GM12878 (cell line): ENCODE measurements at regions of chr3 and their contacts with region 1.

Region 1: GRCh38 chr3:138923531-138923994 is 23.4 kb downstream of the FOXL2 start:
- DNase-seq: peak; percentile 35
- ATAC-seq: peak; percentile 98
- H3K4me3 ChIP-seq: no peak overlapping the region
- H3K27ac ChIP-seq: no peak overlapping the region
- H3K4me1 ChIP-seq: no peaks in the 10 kb centered on the region
- H3K27me3 ChIP-seq: no peaks in the 10 kb centered on the region
- CTCF ChIP-seq: peak; percentile 90 to 93 (median 91)
- EP300 ChIP-seq: no peak
- POLR2A ChIP-seq: no peak
- RAD21 ChIP-seq: peak; percentile 81

Region 2: DNA sequence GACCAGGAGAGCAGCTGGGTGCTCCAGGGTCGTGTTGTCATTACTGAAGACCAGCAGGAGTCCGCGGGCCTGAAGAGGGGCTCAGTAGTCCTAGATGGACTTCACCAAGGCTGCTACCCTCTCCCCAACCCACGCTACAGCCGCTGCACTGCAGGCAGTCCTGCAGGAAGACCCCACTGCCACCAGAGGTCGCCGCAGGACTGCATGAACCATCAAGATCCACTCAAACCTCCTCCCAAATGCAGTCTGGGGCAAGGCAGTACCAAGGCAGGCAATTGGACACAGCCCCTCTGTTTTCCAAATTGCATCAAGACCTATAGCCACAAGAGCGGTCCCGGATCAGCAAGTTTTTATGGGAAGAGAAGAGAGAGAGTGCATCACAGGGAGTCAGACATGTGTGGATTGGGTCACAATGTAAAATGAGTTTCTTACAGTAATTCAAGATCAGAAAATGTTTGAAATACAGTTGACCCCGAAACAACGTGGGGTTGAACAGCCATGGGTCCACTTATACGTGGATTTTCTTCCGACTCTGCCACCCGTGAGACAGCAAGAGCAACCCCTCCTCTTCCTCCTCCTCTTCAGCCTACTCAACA is 854.9 kb before region 1 on chr3:
- CTCF ChIA-PET with region 1: no interaction called
- POLR2A ChIA-PET with region 1: no interaction called
- RAD21 ChIA-PET with region 1: interaction called, 3 read pairs
- SMC1A ChIA-PET with region 1: no interaction called
- in situ Hi-C with region 1: loop called (anchors 10 kb)
- intact Hi-C with region 1: loop called (anchors 2 kb)
- DNase-seq: no peak
- ATAC-seq: peak; percentile 91
- H3K4me3 ChIP-seq: no peak overlapping the region
- H3K27ac ChIP-seq: no peak overlapping the region
- H3K4me1 ChIP-seq: peaks cover 13% of the 10 kb centered on the region
- H3K27me3 ChIP-seq: peaks cover 0 to 2% of the 10 kb centered on the region in 2 experiments; a peak in 3 of 4 replicates
- CTCF ChIP-seq: peak; percentile 94 to 99 (median 98)
- EP300 ChIP-seq: no peak
- POLR2A ChIP-seq: no peak
- RAD21 ChIP-seq: peak; percentile 100

Region 3: DNA sequence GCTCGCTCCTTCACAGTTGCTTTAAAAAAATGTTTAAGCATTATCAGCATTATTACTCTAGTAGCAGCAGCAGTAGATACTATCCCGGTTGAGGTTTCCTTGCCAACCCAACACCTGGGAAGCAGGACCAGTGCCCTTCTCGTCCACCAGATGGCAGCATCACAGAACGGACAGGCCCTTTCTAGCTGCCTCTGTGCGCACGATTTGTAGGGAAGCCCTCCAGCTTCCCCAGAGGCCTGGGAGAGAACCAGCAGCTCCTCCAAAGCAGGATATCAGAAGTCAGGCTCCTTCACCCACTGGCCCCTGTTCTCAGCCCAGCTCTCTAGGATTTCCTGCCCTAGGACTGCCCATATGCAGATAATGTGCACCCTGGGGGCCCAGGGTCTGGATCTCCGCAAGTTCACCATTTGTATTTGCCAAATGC is 506.0 kb before region 1 on chr3:
- CTCF ChIA-PET with region 1: interaction called, 51 read pairs
- POLR2A ChIA-PET with region 1: no interaction called
- RAD21 ChIA-PET with region 1: interaction called, 5 read pairs
- SMC1A ChIA-PET with region 1: interaction called, 14 read pairs
- in situ Hi-C with region 1: loop called (anchors 5 kb)
- intact Hi-C with region 1: loop called (anchors 2 kb)
- DNase-seq: no peak
- ATAC-seq: peak; percentile 98
- H3K4me3 ChIP-seq: no peak overlapping the region
- H3K27ac ChIP-seq: no peak overlapping the region
- H3K4me1 ChIP-seq: no peaks in the 10 kb centered on the region
- H3K27me3 ChIP-seq: peaks cover 0 to 2% of the 10 kb centered on the region in 2 experiments; a peak in 1 of 4 replicates
- CTCF ChIP-seq: peak; percentile 85 to 91 (median 89)
- EP300 ChIP-seq: no peak
- POLR2A ChIP-seq: no peak
- RAD21 ChIP-seq: peak; percentile 67

Region 4: DNA sequence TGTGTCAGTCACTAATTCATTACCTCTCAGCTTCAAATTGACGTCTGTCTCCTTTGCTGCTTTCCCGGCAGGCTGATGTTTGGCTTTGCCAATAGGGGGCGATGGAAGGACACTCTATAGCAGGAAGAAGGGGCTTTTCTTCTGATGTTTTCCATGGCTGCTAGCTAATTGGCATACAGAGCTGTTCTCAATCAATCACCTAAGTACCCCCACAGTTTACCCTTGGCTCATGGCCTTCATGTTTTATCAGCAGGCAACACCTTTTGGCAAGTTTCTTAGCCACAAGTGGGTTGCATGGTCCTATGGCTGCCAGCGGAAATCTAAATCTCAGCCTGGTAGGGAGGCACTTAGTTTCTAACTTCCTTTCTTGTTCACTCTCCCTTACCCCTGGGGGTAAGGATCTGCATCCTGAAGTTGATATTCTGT is 444.1 kb before region 1 on chr3:
- CTCF ChIA-PET with region 1: interaction called, 93 read pairs
- POLR2A ChIA-PET with region 1: no interaction called
- RAD21 ChIA-PET with region 1: interaction called, 20 read pairs
- SMC1A ChIA-PET with region 1: interaction called, 13 read pairs
- in situ Hi-C with region 1: loop called (anchors 5 kb)
- intact Hi-C with region 1: loop called (anchors 1 kb)
- DNase-seq: no peak
- ATAC-seq: peak; percentile 81
- H3K4me3 ChIP-seq: no peak overlapping the region
- H3K27ac ChIP-seq: no peak overlapping the region
- H3K4me1 ChIP-seq: no peaks in the 10 kb centered on the region
- H3K27me3 ChIP-seq: 0 out of 4 replicates have a peak, but pooled peaks cover 0 to 2% of the 10 kb centered on the region in 2 experiments
- CTCF ChIP-seq: peak; percentile 80 to 82 (median 81)
- EP300 ChIP-seq: no peak
- POLR2A ChIP-seq: no peak
- RAD21 ChIP-seq: peak; percentile 76

Region 5: DNA sequence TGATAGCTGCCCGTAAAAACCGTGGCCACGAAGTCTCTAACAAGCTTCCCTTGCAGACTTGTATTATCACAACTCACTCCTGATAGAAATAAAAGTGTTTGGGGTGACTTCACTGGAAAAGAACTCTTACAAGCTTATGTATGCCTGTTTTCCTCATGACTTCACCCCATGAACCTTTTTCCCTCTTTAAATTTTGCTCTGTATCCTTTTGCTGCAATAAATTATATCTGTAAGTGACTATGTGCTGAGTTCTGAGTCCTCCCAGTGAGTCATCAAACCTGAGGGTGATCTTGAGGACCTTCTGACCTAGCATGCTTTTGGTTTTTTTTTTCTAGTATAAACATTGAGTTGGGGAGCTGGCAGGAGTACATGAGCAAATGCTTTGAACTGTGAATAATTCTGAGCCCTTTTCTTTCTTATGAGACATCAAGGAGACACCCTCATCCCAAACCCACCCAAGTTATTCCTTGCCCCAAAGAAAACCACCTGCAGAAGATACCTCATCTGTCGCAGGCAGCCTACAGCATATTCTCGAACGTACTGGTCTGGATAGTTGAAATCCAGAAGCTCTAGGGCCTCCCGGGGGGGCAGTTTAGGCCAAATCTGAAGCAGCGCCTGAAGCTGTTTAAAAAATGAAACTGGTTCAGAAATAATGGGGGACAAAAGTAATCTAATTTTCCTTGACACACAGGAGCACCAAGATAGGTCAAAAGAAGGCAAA is 229.1 kb before region 1 on chr3:
- CTCF ChIA-PET with region 1: interaction called, 380 read pairs
- POLR2A ChIA-PET with region 1: no interaction called
- RAD21 ChIA-PET with region 1: interaction called, 146 read pairs
- SMC1A ChIA-PET with region 1: interaction called, 11 read pairs
- in situ Hi-C with region 1: loop called (anchors 5 kb)
- intact Hi-C with region 1: no loop called
- DNase-seq: no peak
- ATAC-seq: no peak
- H3K4me3 ChIP-seq: no peak overlapping the region
- H3K27ac ChIP-seq: no peak overlapping the region
- H3K4me1 ChIP-seq: no peaks in the 10 kb centered on the region
- H3K27me3 ChIP-seq: no peaks in the 10 kb centered on the region
- CTCF ChIP-seq: no peak
- EP300 ChIP-seq: no peak
- POLR2A ChIP-seq: no peak
- RAD21 ChIP-seq: no peak